PC-9 (cell line): ENCODE measurements at regions of chr20 and their contacts with region 1.

Region 1: DNA sequence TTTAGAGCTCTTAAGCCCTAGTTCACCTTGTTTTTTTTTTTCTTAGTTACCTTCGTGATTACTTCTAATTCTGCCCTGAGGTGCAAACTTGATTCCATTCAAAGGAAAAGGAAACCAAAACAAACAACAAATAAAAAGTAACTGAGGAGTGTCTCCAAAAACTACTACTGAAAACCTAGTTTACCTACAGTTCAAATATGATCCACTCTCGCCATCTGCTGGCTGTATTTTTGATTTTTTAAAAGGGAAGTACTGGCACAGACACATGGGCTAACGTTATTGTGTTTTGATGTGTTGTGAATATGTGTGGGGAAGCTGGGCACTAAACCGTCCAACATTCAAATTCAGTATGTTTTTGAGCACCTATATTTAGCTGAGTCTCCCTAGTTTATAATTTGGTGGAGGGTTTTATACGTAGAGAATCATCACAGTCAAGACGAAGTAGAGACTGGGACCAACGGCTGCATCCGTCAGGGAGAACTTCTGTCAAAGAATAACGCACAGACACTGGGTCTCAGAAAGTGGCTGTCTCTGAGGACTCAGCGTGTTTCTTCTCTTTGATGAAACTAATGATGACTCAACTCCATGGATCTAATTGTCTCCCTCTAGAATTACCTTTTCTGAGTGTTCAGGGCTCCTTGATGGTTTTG is 373.5 kb upstream of the BTBD3 start:
- DNase-seq: peak; percentile 49 to 62
- H3K4me3 ChIP-seq: no peak overlapping the region
- H3K27ac ChIP-seq: peak overlapping the region; percentile 11
- H3K4me1 ChIP-seq: peaks cover 13% of the 10 kb centered on the region
- H3K27me3 ChIP-seq: no peaks in the 10 kb centered on the region
- CTCF ChIP-seq: peak; percentile 81

Region 2: DNA sequence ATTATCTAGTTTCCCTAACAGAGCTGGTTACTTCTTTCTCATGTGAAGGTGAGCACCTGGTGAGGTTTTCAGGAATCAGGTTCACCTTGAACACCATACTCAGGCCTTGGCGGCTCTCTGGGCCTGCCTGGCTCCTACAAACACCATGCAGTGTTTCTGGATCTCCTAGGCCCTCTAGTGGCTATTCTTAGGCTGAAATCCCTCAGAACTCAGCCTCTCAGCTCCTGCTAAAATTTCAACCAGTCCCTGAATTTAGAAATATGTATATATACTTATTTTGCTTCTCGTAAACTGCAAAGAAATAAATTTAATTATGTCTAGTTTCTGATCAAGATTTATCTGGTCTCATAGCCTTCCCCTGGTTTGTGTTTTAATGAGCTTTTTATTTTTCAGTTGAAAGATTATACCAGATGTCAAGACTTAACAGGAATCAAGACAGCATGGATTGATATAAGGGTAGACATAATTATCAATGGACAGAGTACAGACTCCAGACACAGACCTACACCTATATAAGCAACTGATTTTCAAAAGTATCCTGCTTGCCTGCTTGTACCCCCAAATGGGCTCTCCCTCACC is 1453.5 kb before region 1 on chr20:
- CTCF ChIA-PET with region 1: no interaction called
- POLR2A ChIA-PET with region 1: no interaction called
- intact Hi-C with region 1: loop called (anchors 5 kb)
- DNase-seq: peak; percentile 21 to 47
- H3K4me3 ChIP-seq: no peak overlapping the region
- H3K27ac ChIP-seq: no peak overlapping the region
- H3K4me1 ChIP-seq: peaks cover 27% of the 10 kb centered on the region
- H3K27me3 ChIP-seq: no peaks in the 10 kb centered on the region
- CTCF ChIP-seq: peak; percentile 83

Region 3: DNA sequence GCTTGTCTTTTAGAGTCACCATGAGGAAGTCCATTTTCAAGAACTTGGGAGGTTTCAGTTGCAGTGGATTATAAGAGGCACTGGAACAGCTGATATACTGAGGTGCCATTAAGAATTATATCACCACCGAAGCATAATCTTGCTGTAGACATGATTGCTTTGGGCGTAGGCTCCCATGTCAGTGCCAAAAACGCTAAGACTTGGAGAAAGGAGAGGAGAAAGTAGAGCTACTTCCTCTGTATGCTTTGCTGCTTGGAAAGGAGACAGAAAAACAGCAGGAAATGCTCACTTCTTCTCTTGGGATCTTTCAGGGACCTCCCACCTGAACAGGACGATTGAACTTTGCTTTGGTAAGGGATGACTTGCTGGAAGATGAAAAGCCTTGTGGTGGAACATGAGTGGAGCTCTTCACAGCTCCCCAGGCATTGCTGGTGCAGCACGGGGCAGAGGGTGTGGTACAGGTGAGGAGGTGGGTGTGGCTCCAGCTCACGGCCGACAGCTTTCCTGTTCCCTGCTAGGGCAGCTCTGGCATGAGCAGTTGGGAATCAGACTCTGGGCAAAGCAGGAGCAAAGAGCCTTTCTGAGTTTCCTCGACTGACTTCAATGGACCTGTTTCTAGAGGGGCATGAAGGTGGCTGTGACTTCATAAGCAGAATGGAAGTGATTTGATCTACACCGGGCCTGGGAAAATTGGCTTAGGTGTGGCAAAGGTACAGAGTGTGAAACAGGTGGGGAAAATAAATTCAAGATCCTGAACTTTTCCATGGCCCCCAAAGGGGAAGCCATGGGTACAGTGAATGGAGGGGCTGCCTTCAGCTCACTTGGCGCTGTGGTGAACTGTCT is 679.9 kb before region 1 on chr20:
- CTCF ChIA-PET with region 1: no interaction called
- POLR2A ChIA-PET with region 1: no interaction called
- intact Hi-C with region 1: loop called (anchors 1 kb)
- DNase-seq: peak; percentile 65 to 81
- H3K4me3 ChIP-seq: peak overlapping the region; percentile 10; the same call in 1 of the 2 replicates
- H3K27ac ChIP-seq: peak overlapping the region; percentile 75
- H3K4me1 ChIP-seq: peaks cover 42% of the 10 kb centered on the region
- H3K27me3 ChIP-seq: no peaks in the 10 kb centered on the region
- CTCF ChIP-seq: no peak

Region 4: GRCh38 chr20:11267131-11267761 is 276.9 kb before region 1 on chr20:
- CTCF ChIA-PET with region 1: no interaction called
- POLR2A ChIA-PET with region 1: interaction called, 36 read pairs
- intact Hi-C with region 1: loop called (anchors 2 kb)
- DNase-seq: peak; percentile 62 to 84
- H3K4me3 ChIP-seq: peak overlapping the region; percentile 19; the same call in 1 of the 2 replicates
- H3K27ac ChIP-seq: peak overlapping the region; percentile 61
- H3K4me1 ChIP-seq: peaks cover 21% of the 10 kb centered on the region
- H3K27me3 ChIP-seq: no peaks in the 10 kb centered on the region
- CTCF ChIP-seq: no peak

Region 5: GRCh38 chr20:11454966-11455799 is 89.0 kb before region 1 on chr20:
- CTCF ChIA-PET with region 1: interaction called, 5 read pairs
- POLR2A ChIA-PET with region 1: no interaction called
- intact Hi-C with region 1: loop called (anchors 1 kb)
- DNase-seq: peak; percentile 49 to 90
- H3K4me3 ChIP-seq: peak overlapping the region; percentile 13; the same call in 1 of the 2 replicates
- H3K27ac ChIP-seq: peak overlapping the region; percentile 89
- H3K4me1 ChIP-seq: peaks cover 42% of the 10 kb centered on the region
- H3K27me3 ChIP-seq: no peaks in the 10 kb centered on the region
- CTCF ChIP-seq: no peak